ENCODE measurements at regions of chr9 and their contacts with region 1.

Region 1: GRCh38 chr9:114906908-114907571 is 23.4 kb downstream of the TNFSF8 start:
- DNase-seq: peak; percentile 48
- H3K4me3 ChIP-seq: no peak overlapping the region
- H3K27ac ChIP-seq: no peak overlapping the region
- H3K4me1 ChIP-seq: peaks cover 31% of the 10 kb centered on the region
- H3K27me3 ChIP-seq: no peaks in the 10 kb centered on the region
- CTCF ChIP-seq: peak; percentile 61 to 62

Region 2: GRCh38 chr9:114738581-114739316 is 168.3 kb before region 1 on chr9:
- CTCF ChIA-PET with region 1: interaction called, 4 read pairs
- dilution Hi-C with region 1: no loop called
- in situ Hi-C with region 1: loop called (anchors 5 kb)
- intact Hi-C with region 1: loop called (anchors 1 kb)
- DNase-seq: peak; percentile 78
- H3K4me3 ChIP-seq: no peak overlapping the region
- H3K27ac ChIP-seq: no peak overlapping the region
- H3K4me1 ChIP-seq: peaks cover 5% of the 10 kb centered on the region
- H3K27me3 ChIP-seq: no peaks in the 10 kb centered on the region
- CTCF ChIP-seq: peak; percentile 71 to 81

Region 3: GRCh38 chr9:114754581-114754980 is 152.5 kb before region 1 on chr9:
- CTCF ChIA-PET with region 1: no interaction called
- dilution Hi-C with region 1: no loop called
- in situ Hi-C with region 1: no loop called
- intact Hi-C with region 1: no loop called
- DNase-seq: no peak
- H3K4me3 ChIP-seq: no peak overlapping the region
- H3K27ac ChIP-seq: no peak overlapping the region
- H3K4me1 ChIP-seq: no peaks in the 10 kb centered on the region
- H3K27me3 ChIP-seq: no peaks in the 10 kb centered on the region
- CTCF ChIP-seq: no peak

Region 4: DNA sequence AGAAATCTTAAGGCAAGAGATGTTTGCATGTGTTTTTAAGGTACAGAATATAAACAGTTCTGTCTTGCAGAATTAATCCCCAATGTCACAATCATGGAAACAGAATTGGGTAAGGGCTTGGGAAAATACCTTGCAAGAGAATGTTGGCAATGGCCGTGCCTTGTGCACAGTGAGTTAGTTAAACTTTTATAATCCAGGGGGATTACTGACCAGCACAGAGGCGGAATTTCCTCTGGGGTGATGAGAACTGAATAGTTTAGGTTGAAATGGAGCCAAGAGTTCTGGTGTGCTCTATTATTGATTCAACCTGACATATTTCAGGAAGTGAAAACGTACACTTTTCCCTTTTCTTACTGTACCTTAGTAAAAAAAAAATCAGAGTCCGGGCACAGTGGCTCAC is 120.8 kb before region 1 on chr9:
- CTCF ChIA-PET with region 1: no interaction called
- dilution Hi-C with region 1: no loop called
- in situ Hi-C with region 1: no loop called
- intact Hi-C with region 1: loop called (anchors 5 kb)
- DNase-seq: no peak
- H3K4me3 ChIP-seq: no peak overlapping the region
- H3K27ac ChIP-seq: no peak overlapping the region
- H3K4me1 ChIP-seq: peaks cover 19% of the 10 kb centered on the region
- H3K27me3 ChIP-seq: no peaks in the 10 kb centered on the region
- CTCF ChIP-seq: no peak

Region 5: DNA sequence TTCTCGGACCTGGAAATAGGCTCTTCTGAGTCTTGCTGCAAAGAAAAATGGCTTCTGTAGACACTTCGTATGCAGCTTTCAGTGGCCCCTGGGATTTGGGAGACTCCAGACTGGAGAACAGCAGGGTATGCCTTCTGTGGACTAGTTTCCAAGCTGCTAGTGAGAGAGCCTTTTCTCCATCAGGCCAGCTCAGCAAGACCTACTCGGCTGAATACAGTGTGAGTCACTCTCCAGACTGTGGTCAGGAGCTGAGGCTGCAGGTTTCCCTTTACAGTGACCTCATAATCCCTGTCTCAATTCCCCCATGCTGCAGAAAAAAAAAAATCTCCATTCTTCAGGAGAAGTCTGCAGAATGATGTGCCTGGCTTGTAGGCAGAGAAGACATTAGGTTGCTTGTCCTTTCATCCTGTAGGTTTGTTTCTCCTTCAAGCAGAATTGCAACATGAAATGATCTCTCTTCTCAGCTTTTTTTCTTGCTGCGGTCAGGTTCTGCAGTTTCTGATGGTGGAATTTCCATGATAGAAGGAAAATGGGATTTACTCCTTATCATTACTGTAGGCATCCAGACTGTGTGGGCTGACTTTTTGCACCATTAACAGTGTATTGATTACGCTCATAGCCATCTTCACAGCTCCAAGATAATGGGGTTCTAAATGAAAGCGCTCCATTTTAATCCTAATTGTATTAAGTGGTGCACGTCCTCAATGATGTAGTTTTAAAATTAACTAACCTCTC is 101.7 kb after region 1 on chr9:
- CTCF ChIA-PET with region 1: no interaction called
- dilution Hi-C with region 1: loop called (anchors 5 kb)
- in situ Hi-C with region 1: loop called (anchors 5 to 10 kb)
- intact Hi-C with region 1: no loop called
- DNase-seq: peak; percentile 85
- H3K4me3 ChIP-seq: no peak overlapping the region
- H3K27ac ChIP-seq: no peak overlapping the region
- H3K4me1 ChIP-seq: peaks cover 9% of the 10 kb centered on the region
- H3K27me3 ChIP-seq: no peaks in the 10 kb centered on the region
- CTCF ChIP-seq: no peak

Measured in mammary epithelial cell (primary cell).